Right ventricle myocardium superior (tissue), 1 donor: ENCODE measurements at regions of chr1 and their contacts with region 1.

Region 1: GRCh38 chr1:245156081-245156735 is 1.4 kb downstream of the KIF26B start:
- DNase-seq: peak; percentile 88
- ATAC-seq: peak; percentile 89

Region 2: GRCh38 chr1:245370905-245371581 is 214.8 kb after region 1 on chr1:
- intact Hi-C with region 1: loop called (anchors 10 kb)
- DNase-seq: peak; percentile 51
- ATAC-seq: peak; percentile 89

Region 3: DNA sequence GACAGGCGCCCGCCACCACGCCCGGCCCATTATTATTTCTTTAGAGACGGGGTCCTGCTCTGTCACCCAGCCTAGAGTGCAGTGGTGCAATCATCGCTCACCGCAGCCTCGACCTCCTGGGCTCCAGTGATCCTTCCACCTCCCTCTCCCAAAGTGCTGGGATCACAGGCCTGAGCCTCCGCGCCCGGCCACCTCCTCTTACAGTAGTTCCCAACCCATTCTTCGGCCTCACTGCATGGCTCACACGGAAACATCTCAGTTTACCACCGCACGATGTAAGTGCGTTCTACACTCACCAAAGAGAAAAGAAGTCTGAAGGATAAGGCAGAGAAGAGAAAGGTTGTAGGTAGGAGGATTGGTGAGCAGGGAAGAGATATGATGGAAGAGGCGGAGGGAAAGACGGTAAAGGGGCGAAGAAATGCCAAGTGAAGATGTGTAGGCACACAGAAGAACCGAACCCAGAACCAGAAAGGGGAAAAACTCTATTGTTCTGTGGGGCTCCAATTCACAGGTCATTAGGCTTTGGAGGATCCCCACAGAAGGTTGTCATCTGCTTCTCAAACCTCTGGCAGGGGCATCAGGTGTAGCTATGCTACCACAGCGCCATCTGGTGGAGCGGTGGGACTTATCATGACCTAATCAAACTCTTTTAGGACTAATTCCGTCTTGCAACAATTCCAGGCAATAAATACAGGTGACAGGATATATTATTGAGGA is 846.7 kb after region 1 on chr1:
- intact Hi-C with region 1: loop called (anchors 2 kb)
- DNase-seq: peak; percentile 91
- ATAC-seq: peak; percentile 85